ENCODE measurements at regions of chr12 and their contacts with region 1.

Region 1: GRCh38 chr12:109880016-109880931 is at the start of gene GLTP:
- DNase-seq: peak; percentile 82 to 96 (median 94)
- ATAC-seq: peak; percentile 98
- H3K4me3 ChIP-seq: peak within 1 kb of the TSS; percentile 92
- H3K4me3 Mint-ChIP-seq: peak within 1 kb of the TSS; percentile 84 to 97 (median 94)
- H3K27ac ChIP-seq: peak within 1 kb of the TSS; percentile 88
- H3K27ac Mint-ChIP-seq: peak within 1 kb of the TSS; percentile 77 to 97 (median 90)
- H3K4me1 ChIP-seq: peaks cover 24 to 25% of the 10 kb centered on the region in 2 donors
- H3K4me1 Mint-ChIP-seq: peaks cover 27 to 54% (median 50%) of the 10 kb centered on the region in 7 donors
- H3K27me3 ChIP-seq: no peaks in the 10 kb centered on the region
- H3K27me3 Mint-ChIP-seq: peaks cover 0 to 15% (median 0%) of the 10 kb centered on the region in 5 donors
- total RNA-seq, gene GLTP: 19.2 to 36.2 (median 22.1) TPM

Region 2: GRCh38 chr12:109428037-109428629 is 452.1 kb before region 1 on chr12:
- CTCF ChIA-PET with region 1: no interaction called
- POLR2A ChIA-PET with region 1: no interaction called
- intact Hi-C with region 1: loop called in 1 of 2 experiments (anchors 1 kb)
- DNase-seq: peak; percentile 31 to 73 (median 66)
- ATAC-seq: peak; percentile 94
- H3K4me3 ChIP-seq: no peak overlapping the region
- H3K4me3 Mint-ChIP-seq: no peak overlapping the region
- H3K27ac ChIP-seq: no peak overlapping the region
- H3K27ac Mint-ChIP-seq: no peak overlapping the region
- H3K4me1 ChIP-seq: peaks cover under 1 to 2% of the 10 kb centered on the region in 2 donors
- H3K4me1 Mint-ChIP-seq: peaks cover 3 to 9% (median 7%) of the 10 kb centered on the region in 7 donors
- H3K27me3 ChIP-seq: no peaks in the 10 kb centered on the region
- H3K27me3 Mint-ChIP-seq: peaks cover 2 to 26% (median 10%) of the 10 kb centered on the region in 5 donors

Region 3: DNA sequence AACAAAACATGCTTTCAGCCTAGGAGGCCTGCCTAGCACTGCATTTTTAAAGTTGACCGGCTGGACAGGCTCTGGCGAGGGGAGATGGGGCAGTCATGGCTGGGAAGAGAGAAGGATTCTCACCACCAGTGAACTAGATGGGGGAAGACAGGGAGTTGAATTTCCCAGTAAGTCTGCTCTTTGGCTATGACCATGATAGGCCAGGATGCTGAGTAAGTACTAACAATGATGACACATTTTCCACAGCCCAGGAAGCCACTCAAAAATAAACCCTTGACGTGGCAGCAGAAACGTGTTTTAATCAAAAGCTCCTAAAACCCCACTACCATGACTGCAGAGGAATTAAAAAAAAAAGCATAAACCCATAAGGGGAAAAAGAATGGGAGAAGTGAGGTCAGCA is 422.2 kb before region 1 on chr12:
- CTCF ChIA-PET with region 1: no interaction called
- POLR2A ChIA-PET with region 1: no interaction called
- intact Hi-C with region 1: no loop called
- DNase-seq: no peak
- ATAC-seq: no peak
- H3K4me3 ChIP-seq: no peak overlapping the region
- H3K4me3 Mint-ChIP-seq: peak overlapping the region in 1 of 10 donors; percentile 7
- H3K27ac ChIP-seq: no peak overlapping the region
- H3K27ac Mint-ChIP-seq: peak overlapping the region in 3 of 9 donors; percentile 49 to 82 (median 71)
- H3K4me1 ChIP-seq: peaks cover 0 to 16% of the 10 kb centered on the region in 2 donors
- H3K4me1 Mint-ChIP-seq: peaks cover 31 to 62% (median 35%) of the 10 kb centered on the region in 7 donors
- H3K27me3 ChIP-seq: no peaks in the 10 kb centered on the region
- H3K27me3 Mint-ChIP-seq: no peaks in the 10 kb centered on the region

Region 4: DNA sequence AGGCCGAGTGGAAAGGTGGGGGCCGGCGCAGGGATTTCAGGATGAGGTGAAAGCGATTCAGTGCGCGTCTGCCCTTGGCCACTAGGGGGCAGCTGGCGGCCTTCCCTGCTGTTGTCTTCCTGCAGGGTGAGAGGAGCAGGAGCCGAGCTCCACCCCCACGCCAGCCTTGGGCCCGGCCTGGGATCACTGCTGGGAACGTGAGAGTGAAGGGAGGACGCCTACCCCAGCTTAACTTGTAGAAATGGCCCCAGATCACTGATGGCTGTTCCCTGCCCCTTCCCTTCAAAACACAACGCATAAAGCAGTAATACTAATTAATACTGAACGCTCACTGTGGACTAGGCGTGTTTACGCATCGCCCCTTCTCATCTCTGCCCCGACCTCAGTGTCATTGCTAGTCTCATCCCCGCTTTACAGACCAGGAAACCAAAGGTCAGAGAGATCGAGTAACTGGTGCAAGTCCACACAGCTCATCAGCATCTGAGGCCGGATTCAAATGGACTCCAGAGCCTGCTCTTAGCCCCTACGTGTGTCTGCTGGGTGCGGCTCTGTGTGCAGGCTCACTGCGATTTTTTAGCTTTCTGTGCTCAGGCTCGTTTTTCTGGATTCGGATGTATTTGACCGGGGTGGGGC is 282.4 kb before region 1 on chr12:
- CTCF ChIA-PET with region 1: no interaction called
- POLR2A ChIA-PET with region 1: no interaction called
- intact Hi-C with region 1: loop called in 1 of 2 experiments (anchors 1 kb)
- DNase-seq: peak; percentile 24 to 65 (median 48)
- ATAC-seq: peak; percentile 72
- H3K4me3 ChIP-seq: no peak overlapping the region
- H3K4me3 Mint-ChIP-seq: peak overlapping the region in 3 of 10 donors; percentile 2 to 32 (median 22)
- H3K27ac ChIP-seq: no peak overlapping the region
- H3K27ac Mint-ChIP-seq: peak overlapping the region in 1 of 9 donors; percentile 70
- H3K4me1 ChIP-seq: peaks cover 5 to 9% of the 10 kb centered on the region in 2 donors
- H3K4me1 Mint-ChIP-seq: peaks cover 8 to 32% (median 26%) of the 10 kb centered on the region in 7 donors
- H3K27me3 ChIP-seq: no peaks in the 10 kb centered on the region
- H3K27me3 Mint-ChIP-seq: peaks cover 0 to 2% (median 0%) of the 10 kb centered on the region in 5 donors

Region 5: DNA sequence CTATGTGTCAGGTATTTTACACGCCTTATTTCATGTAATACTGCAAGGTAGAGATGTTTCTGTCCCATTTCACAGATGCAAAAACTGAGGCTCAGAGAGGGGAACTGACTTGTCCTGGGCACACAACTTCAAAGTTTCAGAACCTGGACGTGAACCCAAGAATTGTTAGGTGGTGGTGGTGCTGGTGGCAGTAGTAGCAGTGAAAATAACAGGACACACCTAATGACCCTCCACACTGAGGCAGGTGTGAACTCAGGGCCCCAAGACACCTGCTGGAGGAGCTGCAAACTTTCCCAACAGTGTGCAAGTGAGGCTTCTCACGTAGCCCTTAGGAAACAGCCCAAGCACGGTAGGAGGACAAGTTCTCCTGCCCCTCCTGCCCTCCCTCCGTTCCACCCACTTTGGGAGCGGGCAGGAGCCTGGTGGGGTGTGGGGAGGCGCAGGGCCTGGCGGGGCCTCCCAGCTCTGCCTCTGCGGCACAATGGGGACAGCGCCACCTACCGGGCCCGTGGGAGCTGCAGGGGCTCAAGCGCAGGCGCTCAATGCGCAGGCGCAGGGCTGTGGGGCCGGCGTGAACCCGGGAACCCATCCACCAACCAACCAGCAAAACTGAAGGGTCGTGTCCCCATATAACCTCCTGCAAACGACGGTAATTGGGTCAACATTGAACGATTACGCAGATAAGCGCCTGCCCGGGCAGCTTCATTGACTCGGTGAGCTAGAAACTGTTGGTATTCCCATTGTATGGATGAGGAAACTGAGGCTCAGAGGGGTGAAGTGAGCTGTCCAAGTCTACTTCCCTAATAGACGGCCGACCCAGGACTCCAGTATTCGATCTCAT is 35.1 kb before region 1 on chr12:
- CTCF ChIA-PET with region 1: interaction called, 6 read pairs
- POLR2A ChIA-PET with region 1: interaction called, 4 read pairs
- intact Hi-C with region 1: loop called (anchors 2 kb)
- DNase-seq: peak; percentile 65 to 97 (median 80)
- ATAC-seq: peak; percentile 97
- H3K4me3 ChIP-seq: no peak overlapping the region
- H3K4me3 Mint-ChIP-seq: peak overlapping the region in 5 of 10 donors; percentile 32 to 70 (median 51)
- H3K27ac ChIP-seq: no peak overlapping the region
- H3K27ac Mint-ChIP-seq: no peak overlapping the region
- H3K4me1 ChIP-seq: no peaks in the 10 kb centered on the region
- H3K4me1 Mint-ChIP-seq: peaks cover 0 to 10% (median 0%) of the 10 kb centered on the region in 7 donors
- H3K27me3 ChIP-seq: no peaks in the 10 kb centered on the region
- H3K27me3 Mint-ChIP-seq: no peaks in the 10 kb centered on the region

Region 6: DNA sequence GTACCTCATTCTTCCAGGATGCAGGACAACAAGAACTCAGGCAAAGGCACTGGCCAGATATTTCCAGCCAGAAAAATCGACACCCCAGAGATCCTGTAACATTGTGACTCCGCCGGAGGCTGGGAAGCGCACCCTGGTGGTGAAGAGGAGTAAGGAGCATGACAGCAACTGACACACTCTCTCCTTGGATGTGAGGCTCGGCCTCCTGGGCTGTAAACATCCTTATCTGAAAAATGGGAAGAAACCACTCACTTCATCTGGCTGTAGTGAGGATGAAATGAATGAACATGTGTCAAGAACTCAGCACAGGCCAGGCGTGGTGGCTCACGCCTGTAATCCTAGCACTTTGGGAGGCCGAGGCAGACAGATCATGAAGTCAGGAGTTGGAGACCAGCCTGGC is 47.3 kb after region 1 on chr12:
- CTCF ChIA-PET with region 1: no interaction called
- POLR2A ChIA-PET with region 1: no interaction called
- intact Hi-C with region 1: loop called in 1 of 2 experiments (anchors 2 kb)
- DNase-seq: peak in 8 of 9 donors; percentile 19 to 46 (median 28)
- ATAC-seq: peak; percentile 75
- H3K4me3 ChIP-seq: no peak overlapping the region
- H3K4me3 Mint-ChIP-seq: no peak overlapping the region
- H3K27ac ChIP-seq: no peak overlapping the region
- H3K27ac Mint-ChIP-seq: peak overlapping the region in 8 of 9 donors; percentile 4 to 83 (median 41)
- H3K4me1 ChIP-seq: no peaks in the 10 kb centered on the region
- H3K4me1 Mint-ChIP-seq: peaks cover 0 to 3% (median 0%) of the 10 kb centered on the region in 7 donors
- H3K27me3 ChIP-seq: no peaks in the 10 kb centered on the region
- H3K27me3 Mint-ChIP-seq: no peaks in the 10 kb centered on the region

Region 7: DNA sequence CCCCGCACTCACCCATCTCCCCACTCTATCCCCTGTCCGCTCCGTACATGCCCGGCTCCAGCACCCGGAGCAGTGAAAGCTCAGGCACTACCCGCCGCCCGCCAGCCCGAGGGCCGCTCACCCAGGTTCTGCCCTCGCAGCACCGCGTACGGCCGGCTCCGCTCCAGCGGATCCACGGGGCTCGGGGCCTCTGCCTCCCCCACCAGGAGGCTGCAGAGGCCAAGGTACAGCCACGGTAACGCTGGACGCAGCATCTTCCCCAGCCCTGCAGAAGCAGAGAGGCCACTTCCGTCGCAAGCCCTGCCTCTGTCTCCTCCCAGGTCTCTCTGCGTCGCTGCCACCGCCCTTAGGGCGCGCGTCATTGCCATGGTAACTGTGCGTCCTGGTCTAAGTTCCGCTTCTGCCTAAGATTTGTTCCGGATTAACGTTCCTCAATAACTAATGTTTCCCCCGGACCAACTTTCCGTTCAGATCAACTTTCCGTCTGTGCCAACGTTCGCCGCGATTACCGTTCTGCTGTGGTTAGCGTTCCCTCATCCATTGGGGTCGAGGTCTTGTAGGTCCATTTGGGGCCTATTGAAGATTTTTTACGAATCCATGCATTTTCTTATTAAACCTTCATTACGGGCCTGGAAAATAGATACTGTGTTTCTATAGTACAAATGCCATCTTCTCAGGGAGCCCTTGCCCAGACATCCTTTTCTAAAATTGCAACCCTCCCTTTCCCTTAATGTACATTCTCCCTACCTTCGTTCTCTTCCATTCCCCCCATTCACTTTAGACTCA is 168.2 kb after region 1 on chr12 and contains the start of gene C12orf76:
- CTCF ChIA-PET with region 1: no interaction called
- POLR2A ChIA-PET with region 1: no interaction called
- intact Hi-C with region 1: loop called (anchors 2 kb)
- DNase-seq: peak; percentile 67 to 92 (median 90)
- ATAC-seq: peak; percentile 100
- H3K4me3 ChIP-seq: peak within 1 kb of the TSS; percentile 81
- H3K4me3 Mint-ChIP-seq: peak within 1 kb of the TSS; percentile 84 to 97 (median 93)
- H3K27ac ChIP-seq: peak within 1 kb of the TSS; percentile 77
- H3K27ac Mint-ChIP-seq: peak within 1 kb of the TSS; percentile 90 to 99 (median 96)
- H3K4me1 ChIP-seq: peaks cover 19% of the 10 kb centered on the region in 2 donors
- H3K4me1 Mint-ChIP-seq: peaks cover 16 to 46% (median 34%) of the 10 kb centered on the region in 7 donors
- H3K27me3 ChIP-seq: no peaks in the 10 kb centered on the region
- H3K27me3 Mint-ChIP-seq: no peaks in the 10 kb centered on the region
- total RNA-seq, gene C12orf76: 14.6 to 28.7 (median 27.8) TPM

Measured in naive thymus-derived CD4-positive, alpha-beta T cell (primary cell).